HepG2 (cell line): ENCODE measurements at regions of chr3 and their contacts with region 1.

Region 1: GRCh38 chr3:128051837-128052594 is at the start of gene SEC61A1:
- DNase-seq: peak; percentile 86
- ATAC-seq: peak; percentile 95
- H3K4me3 ChIP-seq: peak within 1 kb of the TSS; percentile 96 to 100 (median 98)
- H3K27ac ChIP-seq: peak within 1 kb of the TSS; percentile 93
- H3K4me1 ChIP-seq: peaks cover 37% of the 10 kb centered on the region
- H3K27me3 ChIP-seq: peaks cover 0 to 5% of the 10 kb centered on the region in 2 experiments; a peak in 1 of 5 replicates
- CTCF ChIP-seq: no peak
- EP300 ChIP-seq: 0 out of 4 replicates have a peak, but pooled peaks of 1 of the 2 experiments have one; percentile 18
- POLR2A ChIP-seq: peak; percentile 91 to 92
- RAD21 ChIP-seq: peak; percentile 49; the same call in 1 of the 2 replicates
- total RNA-seq, gene SEC61A1: 128 and 203 TPM in 2 replicates

Region 2: GRCh38 chr3:127762077-127762786 is 289.8 kb before region 1 on chr3:
- CTCF ChIA-PET with region 1: no interaction called
- POLR2A ChIA-PET with region 1: no interaction called
- in situ Hi-C with region 1: no loop called
- intact Hi-C with region 1: no loop called
- DNase-seq: no peak
- ATAC-seq: no peak
- H3K4me3 ChIP-seq: no peak overlapping the region
- H3K27ac ChIP-seq: no peak overlapping the region
- H3K4me1 ChIP-seq: peaks cover 8% of the 10 kb centered on the region; the same call in 1 of the 2 replicates
- H3K27me3 ChIP-seq: peaks cover 3 to 39% of the 10 kb centered on the region in 2 experiments
- CTCF ChIP-seq: no peak
- EP300 ChIP-seq: no peak
- POLR2A ChIP-seq: no peak
- RAD21 ChIP-seq: no peak

Region 3: GRCh38 chr3:128011140-128011539 is 40.9 kb before region 1 on chr3:
- CTCF ChIA-PET with region 1: no interaction called
- POLR2A ChIA-PET with region 1: no interaction called
- in situ Hi-C with region 1: no loop called
- intact Hi-C with region 1: loop called (anchors 2 kb)
- DNase-seq: peak; percentile 29
- ATAC-seq: peak; percentile 61
- H3K4me3 ChIP-seq: no peak overlapping the region
- H3K27ac ChIP-seq: no peak overlapping the region
- H3K4me1 ChIP-seq: peaks cover 35% of the 10 kb centered on the region
- H3K27me3 ChIP-seq: 0 out of 5 replicates have a peak, but pooled peaks cover 0 to 4% of the 10 kb centered on the region in 2 experiments
- CTCF ChIP-seq: peak; percentile 64
- EP300 ChIP-seq: no peak
- POLR2A ChIP-seq: no peak
- RAD21 ChIP-seq: peak; percentile 52; the same call in 1 of the 2 replicates

Region 4: DNA sequence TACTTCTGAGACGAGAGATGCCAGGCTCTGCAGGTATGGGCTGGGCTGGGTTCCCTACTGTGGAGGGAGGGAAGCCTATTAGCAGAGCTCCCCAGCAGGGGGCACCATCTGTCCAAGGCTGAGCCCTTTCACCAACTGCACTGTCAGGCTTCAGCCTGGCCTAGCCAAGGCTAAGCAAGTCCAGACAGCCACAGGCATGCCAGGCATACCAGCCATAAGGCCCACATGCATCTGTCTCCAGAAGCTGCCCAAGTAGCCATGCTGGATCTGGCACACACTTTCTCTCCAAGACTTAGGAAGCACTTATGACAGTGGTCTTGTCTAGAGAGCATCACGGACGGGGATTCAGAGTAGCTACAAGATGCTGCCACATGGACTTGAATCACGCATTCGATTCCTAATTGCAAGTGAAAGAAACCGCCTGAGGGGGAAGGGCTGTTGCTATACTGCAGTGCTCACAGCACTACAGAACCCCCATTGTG is 43.2 kb after region 1 on chr3:
- CTCF ChIA-PET with region 1: no interaction called
- POLR2A ChIA-PET with region 1: no interaction called
- in situ Hi-C with region 1: no loop called
- intact Hi-C with region 1: no loop called
- DNase-seq: peak; percentile 68
- ATAC-seq: peak; percentile 96
- H3K4me3 ChIP-seq: no peak overlapping the region
- H3K27ac ChIP-seq: no peak overlapping the region
- H3K4me1 ChIP-seq: peaks cover 59% of the 10 kb centered on the region
- H3K27me3 ChIP-seq: no peaks in the 10 kb centered on the region
- CTCF ChIP-seq: peak; percentile 97
- EP300 ChIP-seq: no peak
- POLR2A ChIP-seq: no peak
- RAD21 ChIP-seq: peak; percentile 94